Activated naive CD8-positive, alpha-beta T cell treated with anti-CD3 and anti-CD28 coated beads, Interleukin-2, amount 10 ng/mL, durations not matched to agents 7 days and 5 days (primary cell): ENCODE measurements at regions of chr1 and their contacts with region 1.

Region 1: GRCh38 chr1:19485362-19486187 is at the start of gene CAPZB:
- DNase-seq: peak; percentile 96
- ATAC-seq: peak; percentile 89
- H3K4me3 Mint-ChIP-seq: peak within 1 kb of the TSS; percentile 95
- H3K27ac Mint-ChIP-seq: peak within 1 kb of the TSS; percentile 95
- H3K4me1 Mint-ChIP-seq: peaks cover 50% of the 10 kb centered on the region
- H3K27me3 Mint-ChIP-seq: no peaks in the 10 kb centered on the region
- total RNA-seq, gene CAPZB: 395 to 412 TPM

Region 2: GRCh38 chr1:19390901-19391595 is 94.5 kb before region 1 on chr1:
- POLR2A ChIA-PET with region 1: interaction called, 11 read pairs
- DNase-seq: peak; percentile 56
- ATAC-seq: peak; percentile 80
- H3K4me3 Mint-ChIP-seq: peak overlapping the region; percentile 85
- H3K27ac Mint-ChIP-seq: peak overlapping the region; percentile 97
- H3K4me1 Mint-ChIP-seq: peaks cover 52% of the 10 kb centered on the region
- H3K27me3 Mint-ChIP-seq: no peaks in the 10 kb centered on the region

Region 3: GRCh38 chr1:19424651-19425570 is 60.7 kb before region 1 on chr1:
- POLR2A ChIA-PET with region 1: no interaction called
- DNase-seq: no peak
- ATAC-seq: no peak
- H3K4me3 Mint-ChIP-seq: no peak overlapping the region
- H3K27ac Mint-ChIP-seq: no peak overlapping the region
- H3K4me1 Mint-ChIP-seq: peaks cover 26% of the 10 kb centered on the region
- H3K27me3 Mint-ChIP-seq: no peaks in the 10 kb centered on the region

Region 4: GRCh38 chr1:19462781-19463503 is 22.6 kb before region 1 on chr1:
- POLR2A ChIA-PET with region 1: interaction called, 16 read pairs
- DNase-seq: peak; percentile 68
- ATAC-seq: peak; percentile 90
- H3K4me3 Mint-ChIP-seq: peak overlapping the region; percentile 83
- H3K27ac Mint-ChIP-seq: peak overlapping the region; percentile 94
- H3K4me1 Mint-ChIP-seq: peaks cover 72% of the 10 kb centered on the region
- H3K27me3 Mint-ChIP-seq: no peaks in the 10 kb centered on the region

Region 5: DNA sequence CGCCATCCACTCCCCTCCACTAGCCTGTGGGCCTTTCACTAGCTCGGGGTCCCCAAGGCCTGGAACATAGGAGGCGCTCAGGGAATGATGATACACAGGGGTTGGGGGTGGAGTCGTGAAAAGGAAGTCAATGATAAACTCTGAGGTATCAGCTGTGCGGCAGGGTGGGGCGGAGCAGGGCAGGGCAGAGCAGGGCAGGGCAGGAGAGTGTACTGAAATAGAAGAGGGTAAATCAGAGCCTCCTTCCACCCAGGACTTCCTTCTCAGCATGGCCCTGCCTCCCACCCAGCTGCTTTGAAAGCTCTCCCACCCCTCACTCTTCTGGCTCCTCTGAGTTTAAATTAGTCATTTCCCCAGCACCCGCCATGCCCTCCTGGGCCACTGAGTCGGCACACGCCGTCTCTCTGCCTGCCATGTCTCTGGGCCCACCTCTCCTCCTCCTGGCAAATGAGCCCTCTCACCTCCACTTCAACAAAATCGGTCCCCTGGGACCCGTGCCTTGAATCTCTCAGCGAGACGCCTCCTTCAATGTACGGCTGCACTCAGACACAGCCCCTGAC is 17.1 kb before region 1 on chr1:
- POLR2A ChIA-PET with region 1: interaction called, 19 read pairs
- DNase-seq: peak; percentile 62
- ATAC-seq: peak; percentile 84
- H3K4me3 Mint-ChIP-seq: peak overlapping the region; percentile 70
- H3K27ac Mint-ChIP-seq: peak overlapping the region; percentile 89
- H3K4me1 Mint-ChIP-seq: peaks cover 82% of the 10 kb centered on the region
- H3K27me3 Mint-ChIP-seq: no peaks in the 10 kb centered on the region

Region 6: GRCh38 chr1:19495799-19496624 is 10.4 kb after region 1 on chr1:
- POLR2A ChIA-PET with region 1: no interaction called
- DNase-seq: no peak
- ATAC-seq: no peak
- H3K4me3 Mint-ChIP-seq: no peak overlapping the region
- H3K27ac Mint-ChIP-seq: no peak overlapping the region
- H3K4me1 Mint-ChIP-seq: peaks cover 20% of the 10 kb centered on the region
- H3K27me3 Mint-ChIP-seq: no peaks in the 10 kb centered on the region

Region 7: GRCh38 chr1:19582302-19582701 is 96.7 kb after region 1 on chr1:
- POLR2A ChIA-PET with region 1: interaction called, 16 read pairs
- DNase-seq: peak; percentile 81
- ATAC-seq: peak; percentile 89
- H3K4me3 Mint-ChIP-seq: no peak overlapping the region
- H3K27ac Mint-ChIP-seq: no peak overlapping the region
- H3K4me1 Mint-ChIP-seq: peaks cover 6% of the 10 kb centered on the region
- H3K27me3 Mint-ChIP-seq: peaks cover 3% of the 10 kb centered on the region

Region 8: GRCh38 chr1:19596714-19597495 is 111.3 kb after region 1 on chr1:
- POLR2A ChIA-PET with region 1: interaction called, 27 read pairs
- DNase-seq: peak; percentile 93
- ATAC-seq: peak; percentile 84
- H3K4me3 Mint-ChIP-seq: peak overlapping the region; percentile 99
- H3K27ac Mint-ChIP-seq: peak overlapping the region; percentile 100
- H3K4me1 Mint-ChIP-seq: peaks cover 39% of the 10 kb centered on the region
- H3K27me3 Mint-ChIP-seq: no peaks in the 10 kb centered on the region